WTC11 (cell line): ENCODE measurements at regions of chr12 and their contacts with region 1.

Region 1: GRCh38 chr12:49098035-49098451 is 3.4 kb upstream of the DHH start:
- DNase-seq: peak; percentile 87
- ATAC-seq: peak; percentile 73
- H3K4me3 Mint-ChIP-seq: no peak overlapping the region
- H3K27ac Mint-ChIP-seq: no peak overlapping the region
- H3K4me1 Mint-ChIP-seq: peaks cover 21% of the 10 kb centered on the region
- H3K27me3 Mint-ChIP-seq: peaks cover 29% of the 10 kb centered on the region
- CTCF ChIP-seq: peak; percentile 92

Region 2: GRCh38 chr12:49110464-49111155 is 12.6 kb after region 1 on chr12 and contains the start of gene LMBR1L:
- CTCF ChIA-PET with region 1: interaction called, 62 read pairs
- POLR2A ChIA-PET with region 1: no interaction called
- DNase-seq: peak; percentile 97
- ATAC-seq: peak; percentile 96
- H3K4me3 Mint-ChIP-seq: peak within 1 kb of the TSS; percentile 96
- H3K27ac Mint-ChIP-seq: peak within 1 kb of the TSS; percentile 98
- H3K4me1 Mint-ChIP-seq: peaks cover 29% of the 10 kb centered on the region
- H3K27me3 Mint-ChIP-seq: peaks cover 4% of the 10 kb centered on the region
- CTCF ChIP-seq: no peak
- total RNA-seq, gene LMBR1L: 52.8 to 78.2 TPM (median 53.1 TPM) in 3 replicates

Region 3: GRCh38 chr12:49138587-49138986 is 40.5 kb after region 1 on chr12:
- CTCF ChIA-PET with region 1: no interaction called
- POLR2A ChIA-PET with region 1: no interaction called
- DNase-seq: no peak
- ATAC-seq: no peak
- H3K4me3 Mint-ChIP-seq: no peak overlapping the region
- H3K27ac Mint-ChIP-seq: no peak overlapping the region; the same call in 1 of the 2 replicates
- H3K4me1 Mint-ChIP-seq: no peaks in the 10 kb centered on the region
- H3K27me3 Mint-ChIP-seq: no peaks in the 10 kb centered on the region; the same call in 1 of the 2 replicates
- CTCF ChIP-seq: no peak

Region 4: DNA sequence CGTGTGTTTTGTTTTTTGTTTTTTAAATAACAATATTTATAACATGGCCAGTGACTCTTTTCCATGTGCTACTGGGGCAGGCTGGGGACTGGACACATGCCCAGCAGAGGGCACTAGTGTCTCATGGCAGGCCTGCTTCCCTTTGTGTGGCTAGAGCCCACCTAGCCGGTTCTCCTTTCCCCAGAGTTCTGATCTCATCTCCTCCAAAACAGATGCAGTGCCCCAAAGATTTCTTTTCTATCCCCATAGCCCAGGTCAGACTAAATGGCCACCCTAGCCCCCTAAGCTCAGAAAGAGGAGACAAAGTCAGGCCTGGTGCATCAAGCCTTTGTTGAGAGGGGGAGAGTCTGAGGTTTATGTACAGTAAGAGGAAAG is 546.6 kb after region 1 on chr12:
- CTCF ChIA-PET with region 1: no interaction called
- POLR2A ChIA-PET with region 1: no interaction called
- DNase-seq: peak; percentile 80
- ATAC-seq: peak; percentile 75
- H3K4me3 Mint-ChIP-seq: no peak overlapping the region
- H3K27ac Mint-ChIP-seq: peak overlapping the region; percentile 14; the same call in 1 of the 2 replicates
- H3K4me1 Mint-ChIP-seq: peaks cover 16% of the 10 kb centered on the region
- H3K27me3 Mint-ChIP-seq: no peaks in the 10 kb centered on the region
- CTCF ChIP-seq: peak; percentile 85